Caki2 (cell line): ENCODE measurements at regions of chr12 and their contacts with region 1.

Region 1: GRCh38 chr12:82627569-82628198 is 59.0 kb upstream of the TMTC2 start:
- DNase-seq: peak; percentile 48

Region 2: DNA sequence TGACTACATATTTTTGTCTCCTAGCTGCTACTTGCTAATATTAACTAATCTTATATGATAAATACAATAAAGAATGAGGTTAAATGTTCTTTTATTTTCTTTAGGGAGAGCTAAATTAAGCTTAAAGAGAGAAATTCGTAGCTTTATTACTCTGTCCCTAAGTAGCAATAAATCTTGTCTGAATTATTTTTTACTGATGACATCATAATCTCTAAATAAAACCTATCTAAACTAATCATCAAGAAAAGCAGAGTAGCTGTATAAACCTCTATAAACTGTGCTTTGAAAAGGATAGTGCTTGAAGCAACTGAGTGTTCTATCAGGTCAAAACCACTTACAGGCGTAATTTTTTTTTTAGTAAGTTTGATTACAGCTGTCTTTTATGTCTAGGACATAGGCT is 226.9 kb before region 1 on chr12:
- in situ Hi-C with region 1: no loop called
- DNase-seq: no peak

Region 3: DNA sequence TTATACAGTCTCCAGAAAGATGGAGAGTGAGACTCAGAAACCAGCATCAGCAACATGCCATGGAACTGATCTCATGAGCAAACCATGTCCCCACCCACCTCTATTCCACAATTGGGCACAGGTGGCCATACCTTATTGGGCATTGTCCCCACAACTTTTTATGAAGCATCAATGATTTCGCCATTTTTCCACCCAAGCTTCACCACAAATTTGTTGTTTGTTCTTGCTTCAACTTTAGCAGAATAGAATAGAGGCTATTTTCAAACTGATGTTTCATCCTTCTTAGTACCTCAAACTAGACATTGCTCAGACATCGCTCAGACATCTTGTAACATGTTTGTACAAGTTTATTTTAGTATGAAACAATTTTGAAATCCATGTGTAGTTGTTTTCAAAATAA is 53.5 kb before region 1 on chr12:
- in situ Hi-C with region 1: loop called (anchors 10 kb)
- DNase-seq: no peak

Region 4: GRCh38 chr12:83042441-83043200 is 414.9 kb after region 1 on chr12:
- in situ Hi-C with region 1: no loop called
- DNase-seq: no peak